ENCODE measurements at regions of chr15 and their contacts with region 1.

Region 1: DNA sequence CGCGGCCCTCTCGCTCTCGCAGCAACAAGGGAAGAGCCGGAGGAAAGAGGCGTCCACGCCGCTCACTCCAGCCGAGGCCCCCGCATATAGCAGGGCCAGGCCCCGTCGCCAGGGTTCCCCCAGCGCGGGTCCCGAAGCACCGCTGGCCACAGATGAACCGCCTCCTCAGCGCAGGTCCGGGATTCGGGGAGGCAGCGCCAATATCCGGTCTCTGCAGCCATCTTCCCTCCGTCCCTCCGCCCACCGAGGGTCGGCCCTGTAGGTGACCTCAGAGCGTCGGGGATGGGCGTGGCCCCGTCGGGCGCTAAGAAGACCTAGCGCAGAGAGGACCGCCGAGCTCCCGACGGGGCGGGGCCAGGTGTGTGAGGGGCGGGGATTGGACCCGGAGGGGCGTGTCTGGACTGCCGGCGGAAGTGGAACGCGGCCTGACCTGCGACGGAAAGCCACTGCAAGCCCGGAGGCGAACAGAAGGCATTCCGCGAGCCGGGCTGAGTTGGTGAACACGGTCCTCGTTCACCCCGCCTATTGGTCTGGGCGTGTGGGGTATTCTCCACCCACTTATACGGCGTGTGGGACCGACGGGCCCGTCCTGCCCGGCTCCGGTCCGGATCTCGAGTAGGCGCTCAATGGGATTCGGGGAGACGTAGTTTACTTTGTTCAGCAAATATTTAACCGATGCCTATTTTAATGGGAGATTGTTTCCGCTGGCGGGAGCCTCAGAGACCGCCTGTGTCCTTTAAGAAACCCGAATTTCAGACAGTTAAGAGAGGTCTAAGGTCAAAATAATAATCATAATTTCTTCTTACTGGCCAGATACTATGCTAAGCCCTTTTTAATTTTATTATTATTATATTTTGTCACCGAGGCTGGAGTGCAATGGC is 26.9 kb upstream of the MTHFS start:
- DNase-seq: peak; percentile 98
- ATAC-seq: peak; percentile 95
- H3K4me3 Mint-ChIP-seq: peak overlapping the region; percentile 96
- H3K27ac Mint-ChIP-seq: peak overlapping the region; percentile 96
- H3K4me1 Mint-ChIP-seq: peaks cover 26% of the 10 kb centered on the region
- H3K27me3 Mint-ChIP-seq: no peaks in the 10 kb centered on the region
- CTCF ChIP-seq: no peak

Region 2: DNA sequence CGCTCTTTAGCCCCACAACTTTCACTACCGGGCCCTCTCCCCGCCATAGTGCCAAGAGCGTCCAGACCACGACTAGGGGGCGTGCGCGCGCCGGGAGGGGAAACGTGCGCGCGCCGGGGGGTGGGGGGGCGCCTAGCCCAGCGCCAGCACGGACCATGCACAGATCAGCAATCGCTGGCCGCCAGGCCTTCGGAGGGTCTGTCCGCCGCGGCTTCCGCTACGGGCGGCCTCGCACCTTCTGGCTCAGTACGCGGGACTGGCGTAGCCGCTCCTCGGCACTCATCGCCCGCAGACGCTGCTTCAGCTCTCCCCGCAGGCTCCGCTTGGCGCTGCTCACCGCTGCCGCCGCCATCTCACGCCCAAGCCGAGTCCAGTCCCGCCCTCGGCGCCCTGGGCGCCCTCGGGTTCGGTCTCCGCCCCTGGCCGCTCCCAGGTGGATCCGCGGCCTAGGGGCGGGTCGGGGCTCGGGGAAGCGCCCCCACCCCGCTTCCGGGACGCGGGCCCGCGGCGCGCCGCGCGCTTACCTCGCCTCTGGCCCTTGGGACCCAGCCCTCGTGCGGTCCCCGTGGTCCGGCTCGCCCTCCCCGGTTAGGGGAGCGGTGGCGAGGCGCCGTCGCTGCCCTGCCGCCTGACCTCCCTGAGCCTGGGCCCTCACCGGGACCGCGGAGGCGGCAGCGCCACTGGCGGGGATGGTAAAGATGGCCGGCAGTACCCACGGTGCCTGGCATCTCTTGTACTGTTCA is 26.9 kb before region 1 on chr15 and contains the start of gene MTHFS:
- CTCF ChIA-PET with region 1: interaction called, 9 read pairs
- POLR2A ChIA-PET with region 1: interaction called, 26 read pairs
- intact Hi-C with region 1: no loop called
- DNase-seq: peak; percentile 77
- ATAC-seq: peak; percentile 78
- H3K4me3 Mint-ChIP-seq: peak within 1 kb of the TSS; percentile 98
- H3K27ac Mint-ChIP-seq: peak within 1 kb of the TSS; percentile 100
- H3K4me1 Mint-ChIP-seq: peaks cover 47% of the 10 kb centered on the region
- H3K27me3 Mint-ChIP-seq: no peaks in the 10 kb centered on the region
- CTCF ChIP-seq: peak; percentile 20
- total RNA-seq, gene MTHFS: 27.3 to 28.4 TPM

Region 3: DNA sequence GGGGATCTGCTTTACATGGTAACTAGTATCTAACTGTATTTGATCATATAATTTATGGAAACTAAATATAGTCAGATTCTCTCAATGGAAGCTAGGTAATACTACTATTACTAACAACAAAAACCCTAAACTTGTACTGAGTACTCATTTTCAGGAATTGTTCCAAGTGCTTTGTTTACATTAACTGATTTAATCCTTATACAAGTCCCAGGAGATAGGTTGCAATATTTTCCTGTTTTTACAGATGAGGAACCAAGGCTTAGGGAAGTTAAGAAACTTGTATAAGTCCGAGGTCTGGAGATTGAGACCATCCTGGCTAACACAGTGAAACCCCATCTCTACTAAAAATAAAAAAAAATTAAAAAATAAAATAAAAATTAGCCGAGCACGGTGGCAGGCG is 19.5 kb before region 1 on chr15:
- CTCF ChIA-PET with region 1: interaction called, 7 read pairs
- POLR2A ChIA-PET with region 1: interaction called, 26 read pairs
- intact Hi-C with region 1: no loop called
- DNase-seq: no peak
- ATAC-seq: no peak
- H3K4me3 Mint-ChIP-seq: no peak overlapping the region
- H3K27ac Mint-ChIP-seq: no peak overlapping the region
- H3K4me1 Mint-ChIP-seq: peaks cover 27% of the 10 kb centered on the region
- H3K27me3 Mint-ChIP-seq: no peaks in the 10 kb centered on the region
- CTCF ChIP-seq: no peak

Region 4: DNA sequence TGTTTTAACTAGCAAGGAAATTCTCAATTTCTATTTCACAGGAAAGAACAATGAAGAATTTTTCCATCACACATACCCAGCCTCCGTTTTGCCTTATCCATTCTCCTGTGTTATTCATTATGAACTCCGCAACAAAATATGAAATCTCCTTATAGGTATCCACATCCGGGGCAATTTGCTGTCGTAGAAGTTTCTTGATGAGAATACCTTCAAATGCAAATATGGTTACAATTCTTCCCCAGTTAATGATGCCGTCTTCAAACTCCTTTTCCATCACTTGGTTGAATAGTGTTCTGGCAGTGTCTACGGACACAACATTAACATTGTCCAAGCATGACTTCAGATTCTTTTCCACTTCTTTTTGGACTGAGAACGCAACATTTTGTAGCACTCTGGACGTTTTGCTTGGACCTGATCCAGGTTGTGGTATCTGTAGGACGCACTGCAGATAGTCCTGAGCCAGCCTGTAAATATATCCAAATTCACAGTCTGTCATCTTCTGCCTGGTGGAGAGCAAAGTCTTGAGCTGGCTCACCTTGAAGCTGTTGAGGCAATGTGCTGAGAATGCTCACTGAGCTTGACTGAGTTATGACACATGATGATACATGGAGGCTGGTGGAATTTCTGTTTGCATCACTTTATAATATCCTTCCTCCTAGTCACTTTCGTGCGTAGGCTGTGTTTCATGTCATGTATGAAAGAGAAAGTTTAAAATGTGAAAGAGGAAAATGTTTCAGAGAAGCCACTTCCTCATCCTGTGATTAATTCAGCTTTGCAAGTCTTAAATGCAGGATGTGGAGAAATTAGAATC is 47.1 kb after region 1 on chr15 and contains the start of gene BCL2A1:
- CTCF ChIA-PET with region 1: interaction called, 4 read pairs
- POLR2A ChIA-PET with region 1: interaction called, 47 read pairs
- intact Hi-C with region 1: loop called (anchors 1 kb)
- DNase-seq: peak; percentile 82
- ATAC-seq: peak; percentile 74
- H3K4me3 Mint-ChIP-seq: peak within 1 kb of the TSS; percentile 96
- H3K27ac Mint-ChIP-seq: peak within 1 kb of the TSS; percentile 93
- H3K4me1 Mint-ChIP-seq: peaks cover 49% of the 10 kb centered on the region
- H3K27me3 Mint-ChIP-seq: no peaks in the 10 kb centered on the region
- CTCF ChIP-seq: no peak
- total RNA-seq, gene BCL2A1: 47.1 to 47.9 TPM

Region 5: GRCh38 chr15:79989682-79990081 is 65.9 kb after region 1 on chr15:
- CTCF ChIA-PET with region 1: interaction called, 6 read pairs
- POLR2A ChIA-PET with region 1: interaction called, 11 read pairs
- intact Hi-C with region 1: no loop called
- DNase-seq: no peak
- ATAC-seq: no peak
- H3K4me3 Mint-ChIP-seq: no peak overlapping the region
- H3K27ac Mint-ChIP-seq: no peak overlapping the region
- H3K4me1 Mint-ChIP-seq: peaks cover 6% of the 10 kb centered on the region
- H3K27me3 Mint-ChIP-seq: no peaks in the 10 kb centered on the region
- CTCF ChIP-seq: no peak